ENCODE measurements at regions of chr1 and their contacts with region 1.

Region 1: GRCh38 chr1:193421487-193421886 is 235.1 kb upstream of the B3GALT2 start:
- DNase-seq: no peak
- H3K4me3 ChIP-seq: no peak overlapping the region
- H3K27ac ChIP-seq: no peak overlapping the region
- H3K4me1 ChIP-seq: no peaks in the 10 kb centered on the region
- H3K27me3 ChIP-seq: no peaks in the 10 kb centered on the region
- CTCF ChIP-seq: no peak

Region 2: GRCh38 chr1:193539731-193540459 is 118.4 kb after region 1 on chr1:
- intact Hi-C with region 1: loop called (anchors 10 kb)
- DNase-seq: no peak
- H3K4me3 ChIP-seq: no peak overlapping the region
- H3K27ac ChIP-seq: no peak overlapping the region
- H3K4me1 ChIP-seq: no peaks in the 10 kb centered on the region
- H3K27me3 ChIP-seq: no peaks in the 10 kb centered on the region
- CTCF ChIP-seq: no peak